Heart right ventricle (tissue), 16 donors: ENCODE measurements at regions of chr7 and their contacts with region 1.

Region 1: DNA sequence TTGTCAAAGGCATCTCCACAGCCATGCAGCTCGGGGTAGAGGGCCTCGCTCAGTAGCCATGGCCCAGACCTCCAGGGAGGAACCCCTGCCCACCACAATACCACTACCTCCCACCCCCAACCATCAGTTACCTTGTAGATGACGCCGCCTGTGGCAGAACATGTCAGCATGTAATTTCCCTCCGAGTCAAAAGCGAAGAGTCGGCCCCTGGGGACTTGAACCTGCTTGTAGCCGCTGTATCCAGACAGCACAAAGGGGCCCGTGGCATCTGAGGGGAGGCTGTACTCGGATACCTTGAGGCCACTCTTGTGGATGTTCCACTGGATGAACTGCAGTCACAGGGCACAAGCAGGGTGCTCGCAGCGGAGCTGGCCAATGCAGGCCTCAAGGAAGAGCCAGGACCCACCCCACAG is 16.3 kb upstream of the CYREN start:
- DNase-seq: no peak
- ATAC-seq: peak in 1 of 8 donors; percentile 11
- H3K4me3 ChIP-seq: no peak overlapping the region
- H3K27ac ChIP-seq: no peak overlapping the region
- H3K4me1 ChIP-seq: peaks cover 0 to 14% (median 0%) of the 10 kb centered on the region in 9 donors
- H3K27me3 ChIP-seq: no peaks in the 10 kb centered on the region
- CTCF ChIP-seq: no peak

Region 2: DNA sequence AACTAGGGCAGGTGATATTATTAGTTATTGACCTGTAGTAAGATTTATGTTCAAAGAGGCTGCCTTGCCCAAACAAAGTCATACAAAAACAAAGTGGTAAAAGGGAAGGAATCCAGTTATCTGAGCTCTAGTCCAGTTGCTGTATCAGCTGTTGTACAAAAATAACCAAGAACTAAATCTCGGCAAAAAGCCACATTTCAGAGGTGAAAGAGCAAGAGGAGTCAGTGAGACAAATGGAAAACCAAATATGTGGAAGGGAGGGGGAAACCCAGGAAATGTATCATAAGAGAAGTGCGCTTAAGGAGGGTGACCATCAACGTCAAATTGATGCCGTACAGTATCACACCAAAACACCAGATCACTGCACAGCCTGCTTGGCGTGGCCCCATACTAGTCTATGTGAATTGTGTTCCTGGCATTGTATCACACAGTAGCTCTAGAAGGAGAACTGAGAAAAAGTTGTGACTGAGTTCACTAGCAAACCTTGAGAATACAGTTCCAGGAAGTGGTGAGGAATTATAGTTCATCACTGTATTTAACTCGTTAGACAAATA is 194.1 kb before region 1 on chr7:
- intact Hi-C with region 1: loop called in 1 of 10 experiments (anchors 10 kb)
- DNase-seq: peak in 1 of 2 donors; percentile 32
- ATAC-seq: peak in 7 of 8 donors; percentile 53 to 75 (median 67)
- H3K4me3 ChIP-seq: no peak overlapping the region
- H3K27ac ChIP-seq: peak overlapping the region in 6 of 10 donors; percentile 21 to 63 (median 35)
- H3K4me1 ChIP-seq: peaks cover 0 to 43% (median 17%) of the 10 kb centered on the region in 9 donors
- H3K27me3 ChIP-seq: no peaks in the 10 kb centered on the region
- CTCF ChIP-seq: no peak